ENCODE measurements at regions of chr19 and their contacts with region 1.

Region 1: GRCh38 chr19:38869856-38870607 is 8.0 kb downstream of the RINL start:
- DNase-seq: peak; percentile 94
- ATAC-seq: peak; percentile 87
- H3K4me3 Mint-ChIP-seq: peak overlapping the region; percentile 92
- H3K27ac Mint-ChIP-seq: peak overlapping the region; percentile 91
- H3K4me1 Mint-ChIP-seq: peaks cover 57% of the 10 kb centered on the region
- H3K27me3 Mint-ChIP-seq: no peaks in the 10 kb centered on the region
- CTCF ChIP-seq: no peak

Region 2: GRCh38 chr19:38478273-38478967 is 391.6 kb before region 1 on chr19:
- CTCF ChIA-PET with region 1: no interaction called
- POLR2A ChIA-PET with region 1: no interaction called
- intact Hi-C with region 1: no loop called
- DNase-seq: no peak
- ATAC-seq: no peak
- H3K4me3 Mint-ChIP-seq: no peak overlapping the region
- H3K27ac Mint-ChIP-seq: no peak overlapping the region
- H3K4me1 Mint-ChIP-seq: no peaks in the 10 kb centered on the region
- H3K27me3 Mint-ChIP-seq: peaks cover 5% of the 10 kb centered on the region
- CTCF ChIP-seq: no peak

Region 3: DNA sequence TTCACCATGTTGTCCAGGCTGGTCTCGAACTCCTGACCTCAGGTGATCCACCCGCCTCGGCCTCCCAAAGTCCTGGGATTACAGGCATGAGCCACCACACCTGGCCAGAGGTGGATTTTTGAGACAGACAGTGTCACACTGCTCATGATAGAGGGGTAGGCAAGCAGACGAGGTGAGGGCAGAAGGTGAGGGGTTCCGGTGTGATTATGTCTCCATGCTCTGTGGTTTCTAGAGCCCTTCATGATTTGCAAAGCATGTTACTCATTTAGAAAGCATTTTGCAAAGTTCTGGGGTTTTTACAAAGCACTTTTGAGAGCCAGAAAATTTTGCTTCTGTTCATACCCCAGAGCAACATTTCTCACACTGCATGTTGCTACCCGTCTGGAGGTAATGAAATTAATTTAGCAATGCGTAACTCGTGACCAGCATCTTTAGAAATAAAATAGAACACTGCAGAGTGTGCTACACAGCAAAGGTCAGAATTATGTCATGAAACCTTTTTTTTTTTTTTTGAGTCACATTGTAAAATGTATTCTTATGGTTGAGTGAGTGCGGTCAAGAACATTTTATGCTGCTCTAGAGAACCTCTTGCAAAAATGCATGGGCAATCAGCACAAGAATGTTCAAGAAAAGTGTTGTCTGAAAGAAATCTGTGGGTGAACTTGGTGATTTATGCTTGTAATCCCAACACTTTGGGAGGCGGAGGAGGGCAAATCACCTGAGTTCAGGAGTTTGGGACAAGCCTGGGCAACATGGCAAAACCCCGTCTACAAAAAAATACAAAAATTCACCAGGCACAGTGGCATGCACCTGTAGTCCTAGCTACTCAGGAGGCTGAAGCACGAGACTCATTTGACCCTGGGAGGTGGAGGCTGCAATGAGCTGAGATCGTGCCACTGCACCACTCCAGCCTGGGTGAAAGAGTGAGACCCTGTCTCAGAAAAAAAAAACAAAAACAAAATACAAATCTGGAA is 310.3 kb before region 1 on chr19:
- CTCF ChIA-PET with region 1: no interaction called
- POLR2A ChIA-PET with region 1: interaction called, 4 read pairs
- intact Hi-C with region 1: loop called (anchors 10 kb)
- DNase-seq: no peak
- ATAC-seq: peak; percentile 82
- H3K4me3 Mint-ChIP-seq: peak overlapping the region; percentile 75
- H3K27ac Mint-ChIP-seq: peak overlapping the region; percentile 90
- H3K4me1 Mint-ChIP-seq: peaks cover 57% of the 10 kb centered on the region
- H3K27me3 Mint-ChIP-seq: peaks cover 6% of the 10 kb centered on the region
- CTCF ChIP-seq: no peak

Region 4: GRCh38 chr19:38647368-38647965 is 222.6 kb before region 1 on chr19 and contains the start of gene ACTN4:
- CTCF ChIA-PET with region 1: no interaction called
- POLR2A ChIA-PET with region 1: no interaction called
- intact Hi-C with region 1: no loop called
- DNase-seq: peak; percentile 100
- ATAC-seq: peak; percentile 91
- H3K4me3 Mint-ChIP-seq: peak within 1 kb of the TSS; percentile 95
- H3K27ac Mint-ChIP-seq: peak within 1 kb of the TSS; percentile 82
- H3K4me1 Mint-ChIP-seq: peaks cover 42% of the 10 kb centered on the region
- H3K27me3 Mint-ChIP-seq: no peaks in the 10 kb centered on the region
- CTCF ChIP-seq: no peak
- total RNA-seq, gene ACTN4: 197 and 198 TPM in 2 replicates

Region 5: DNA sequence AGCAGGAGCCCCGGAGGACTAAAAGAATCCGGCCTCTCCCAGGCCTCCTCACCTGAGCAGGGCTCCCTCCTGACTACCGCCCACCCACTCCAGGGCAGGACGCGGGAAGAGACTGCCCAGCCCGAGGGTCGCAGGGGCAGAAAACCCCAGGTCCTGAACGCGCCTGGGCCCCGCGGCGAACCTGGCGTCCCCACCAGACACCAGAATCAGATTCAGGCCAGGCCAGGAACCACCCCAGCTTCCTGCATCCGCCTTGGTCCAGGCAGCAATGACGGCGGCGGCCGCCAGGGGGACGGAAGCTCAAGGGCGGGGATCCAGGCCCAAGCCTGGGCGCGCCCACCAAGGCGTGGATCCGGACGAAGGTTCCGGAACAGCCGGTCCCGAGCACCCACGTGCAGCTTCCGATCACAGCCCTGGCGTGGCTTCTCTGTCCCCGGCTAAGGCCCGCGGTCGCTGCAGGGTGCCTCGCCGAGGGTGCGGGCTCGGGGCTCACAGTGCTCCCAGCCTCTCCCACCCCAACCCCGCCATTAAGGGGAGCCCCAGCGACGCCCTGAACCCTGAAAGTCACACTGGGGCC is 100.3 kb before region 1 on chr19:
- CTCF ChIA-PET with region 1: interaction called, 6 read pairs
- POLR2A ChIA-PET with region 1: interaction called, 25 read pairs
- intact Hi-C with region 1: no loop called
- DNase-seq: peak; percentile 94
- ATAC-seq: peak; percentile 89
- H3K4me3 Mint-ChIP-seq: peak overlapping the region; percentile 68
- H3K27ac Mint-ChIP-seq: peak overlapping the region; percentile 78
- H3K4me1 Mint-ChIP-seq: peaks cover 11% of the 10 kb centered on the region
- H3K27me3 Mint-ChIP-seq: no peaks in the 10 kb centered on the region
- CTCF ChIP-seq: peak; percentile 59

Region 6: DNA sequence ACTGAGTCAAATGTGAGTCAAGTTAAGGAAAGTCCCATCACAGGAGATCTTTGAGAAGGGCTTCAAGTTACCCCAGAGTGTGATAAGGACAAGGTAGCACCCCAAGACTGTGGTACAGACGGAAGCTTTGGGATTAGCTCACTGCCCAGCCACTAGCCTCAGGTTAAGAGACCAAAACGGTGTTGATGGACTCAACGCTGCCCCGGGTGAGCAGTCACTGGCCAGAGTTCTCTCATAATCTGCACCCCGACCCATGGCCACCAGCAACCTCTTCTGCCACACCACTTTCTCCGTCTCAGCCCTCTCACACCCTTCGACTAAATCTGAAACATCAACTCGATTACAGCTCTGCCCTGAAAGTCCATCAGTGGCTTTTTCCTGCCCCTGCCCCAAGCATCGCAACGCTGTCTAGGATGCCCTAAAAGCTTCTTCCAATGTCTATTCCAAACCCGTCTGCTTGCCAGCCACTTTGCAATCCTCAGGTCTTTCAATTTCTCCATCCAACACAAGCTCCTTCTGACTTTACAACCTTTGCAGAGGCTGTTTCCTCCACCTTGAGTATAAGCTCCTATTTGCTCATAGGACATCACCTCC is 25.8 kb before region 1 on chr19:
- CTCF ChIA-PET with region 1: interaction called, 35 read pairs
- POLR2A ChIA-PET with region 1: interaction called, 463 read pairs
- intact Hi-C with region 1: no loop called
- DNase-seq: no peak
- ATAC-seq: no peak
- H3K4me3 Mint-ChIP-seq: no peak overlapping the region
- H3K27ac Mint-ChIP-seq: peak overlapping the region; percentile 46
- H3K4me1 Mint-ChIP-seq: peaks cover 68% of the 10 kb centered on the region
- H3K27me3 Mint-ChIP-seq: no peaks in the 10 kb centered on the region
- CTCF ChIP-seq: no peak

Region 7: GRCh38 chr19:38891771-38892170 is 21.7 kb after region 1 on chr19:
- CTCF ChIA-PET with region 1: interaction called, 16 read pairs
- POLR2A ChIA-PET with region 1: interaction called, 8 read pairs
- intact Hi-C with region 1: loop called (anchors 1 kb)
- DNase-seq: no peak
- ATAC-seq: no peak
- H3K4me3 Mint-ChIP-seq: no peak overlapping the region
- H3K27ac Mint-ChIP-seq: no peak overlapping the region
- H3K4me1 Mint-ChIP-seq: peaks cover 1% of the 10 kb centered on the region
- H3K27me3 Mint-ChIP-seq: no peaks in the 10 kb centered on the region
- CTCF ChIP-seq: no peak

Region 8: DNA sequence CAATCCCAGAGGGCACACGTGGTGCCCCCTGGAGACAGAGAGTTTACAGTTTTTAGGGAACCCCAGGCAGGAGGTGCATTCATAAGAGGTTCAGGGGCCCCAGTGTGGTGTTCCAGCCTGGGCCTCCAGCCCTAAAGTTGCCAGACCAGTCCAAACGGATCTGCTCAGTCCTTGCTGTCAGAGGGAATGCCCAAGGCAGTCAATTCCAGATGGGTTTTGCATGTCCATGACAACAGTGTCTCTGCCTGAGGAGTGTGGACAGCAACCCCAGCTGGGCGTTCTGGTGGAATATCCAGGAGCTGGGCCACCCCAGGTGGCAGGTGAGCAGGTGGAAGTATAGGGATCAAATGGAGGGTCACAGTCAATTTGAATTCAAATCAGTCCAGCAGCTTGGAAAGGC is 137.1 kb after region 1 on chr19:
- CTCF ChIA-PET with region 1: no interaction called
- POLR2A ChIA-PET with region 1: no interaction called
- intact Hi-C with region 1: no loop called
- DNase-seq: no peak
- ATAC-seq: no peak
- H3K4me3 Mint-ChIP-seq: no peak overlapping the region
- H3K27ac Mint-ChIP-seq: no peak overlapping the region
- H3K4me1 Mint-ChIP-seq: no peaks in the 10 kb centered on the region
- H3K27me3 Mint-ChIP-seq: peaks cover 10% of the 10 kb centered on the region
- CTCF ChIP-seq: no peak